Activated T-helper 1 cell treated with anti-CD3 and anti-CD28 coated beads, Interleukin-12 subunit alpha, Interleukin-12 subunit beta, Interleukin-2, Interleukin-4 antibody, amounts not matched to agents 30 ng/mL and 10 ng/mL and 1 ng/mL, durations not matched to agents 14 hours and 24 hours and 36 hours (primary cell): ENCODE measurements at regions of chr10 and their contacts with region 1.

Region 1: DNA sequence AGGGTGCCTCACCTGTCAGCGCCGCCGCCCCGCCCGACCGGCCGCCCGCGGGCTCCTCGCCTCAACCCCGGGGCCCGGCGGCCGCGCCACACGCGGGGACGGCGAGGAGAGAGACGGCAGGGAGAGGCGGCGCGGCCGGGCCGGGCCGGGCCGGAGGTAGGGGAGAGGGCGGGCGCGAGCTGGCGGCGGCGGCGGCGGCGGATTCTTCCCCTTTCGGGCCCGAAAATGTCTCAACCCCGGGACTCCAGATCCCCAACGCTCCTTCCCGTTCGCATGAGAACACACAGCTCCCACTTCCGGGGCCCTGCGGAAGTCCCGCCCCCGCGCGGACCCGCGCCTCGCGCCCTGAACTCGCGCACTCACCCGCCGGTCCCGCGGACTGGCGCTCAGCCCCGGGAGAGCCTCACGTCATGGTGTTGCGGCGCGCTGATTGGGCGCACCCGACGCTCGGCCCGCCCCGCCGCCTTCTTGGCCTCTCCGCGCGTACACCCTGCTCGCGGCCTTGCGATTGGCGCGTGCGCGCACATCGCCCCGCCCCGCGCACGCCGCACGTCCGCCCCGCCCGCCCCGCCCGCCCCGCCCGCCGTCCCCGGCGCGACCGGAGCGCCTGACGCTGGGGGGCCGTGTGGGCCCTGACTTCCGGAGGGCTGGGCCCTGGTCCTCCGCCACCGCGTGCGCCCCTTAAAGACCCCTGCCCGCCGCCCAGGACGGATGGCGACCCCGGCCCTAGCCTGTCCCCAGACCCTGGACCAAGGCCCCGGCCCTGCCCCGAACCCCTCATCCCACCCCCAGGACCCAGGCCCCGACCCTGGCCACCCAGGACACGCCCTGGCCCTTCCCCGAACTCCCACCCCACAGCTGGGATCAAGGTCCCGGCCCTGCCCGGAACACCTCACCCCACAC is at the start of gene LARP4B:
- DNase-seq: peak; percentile 98
- H3K4me3 Mint-ChIP-seq: peak within 1 kb of the TSS; percentile 99
- H3K27ac Mint-ChIP-seq: peak within 1 kb of the TSS; percentile 96
- H3K4me1 Mint-ChIP-seq: peaks cover 31% of the 10 kb centered on the region
- H3K27me3 Mint-ChIP-seq: no peaks in the 10 kb centered on the region
- total RNA-seq, gene LARP4B: 172 and 174 TPM in 2 replicates

Region 2: DNA sequence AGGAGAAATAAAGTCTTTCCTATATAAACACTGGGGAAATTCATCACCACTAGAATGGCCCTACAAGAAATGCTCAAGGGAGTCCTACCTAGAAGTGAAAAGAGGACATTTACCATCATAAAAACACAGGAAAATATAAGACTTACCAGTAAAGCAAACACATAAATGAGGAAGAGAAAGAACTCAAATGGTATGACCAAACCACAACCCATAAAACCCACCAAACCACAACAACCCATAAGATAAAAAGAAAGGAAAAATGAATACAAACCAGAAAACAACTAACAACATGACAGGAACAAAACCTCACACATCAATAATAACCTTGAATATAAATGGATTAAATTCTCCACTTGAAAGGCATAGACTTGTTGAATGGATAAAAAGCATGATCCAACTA is 170.3 kb before region 1 on chr10:
- intact Hi-C with region 1: no loop called
- DNase-seq: no peak
- H3K4me3 Mint-ChIP-seq: no peak overlapping the region
- H3K27ac Mint-ChIP-seq: no peak overlapping the region
- H3K4me1 Mint-ChIP-seq: peaks cover 11% of the 10 kb centered on the region
- H3K27me3 Mint-ChIP-seq: peaks cover 6% of the 10 kb centered on the region

Region 3: DNA sequence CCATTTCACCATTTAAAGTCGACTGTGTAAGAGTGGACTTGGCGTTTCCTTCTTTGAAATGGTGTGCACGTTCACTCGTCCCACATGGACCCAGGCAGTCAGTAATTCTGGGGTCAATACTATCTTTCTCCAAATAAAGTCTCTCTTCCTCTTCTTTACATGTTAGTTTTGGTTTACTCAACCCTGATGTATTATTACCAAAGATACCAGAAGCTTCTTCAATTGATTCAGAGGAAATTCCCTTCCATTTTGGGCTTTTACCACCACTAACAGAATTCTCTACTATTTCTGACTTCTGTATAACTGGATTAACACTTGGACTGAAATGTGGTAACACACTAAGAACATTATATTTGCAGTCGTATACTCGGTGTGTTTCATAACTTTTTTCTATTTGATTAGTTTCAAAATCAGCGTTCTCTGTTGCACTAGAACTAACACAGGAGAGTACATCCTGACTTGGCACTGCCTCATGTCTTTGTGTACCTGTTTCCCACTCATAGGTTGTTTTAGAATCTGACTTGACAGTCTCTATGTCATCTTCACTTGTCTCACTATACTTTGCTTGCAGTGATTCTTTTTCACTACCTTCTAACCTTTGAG is 61.0 kb before region 1 on chr10:
- intact Hi-C with region 1: loop called (anchors 2 kb)
- DNase-seq: no peak
- H3K4me3 Mint-ChIP-seq: no peak overlapping the region
- H3K27ac Mint-ChIP-seq: peak overlapping the region; percentile 30
- H3K4me1 Mint-ChIP-seq: peaks cover 42% of the 10 kb centered on the region
- H3K27me3 Mint-ChIP-seq: no peaks in the 10 kb centered on the region

Region 4: GRCh38 chr10:1048732-1049424 is 117.2 kb after region 1 on chr10 and contains the start of gene IDI1:
- intact Hi-C with region 1: loop called (anchors 1 kb)
- DNase-seq: peak; percentile 97
- H3K4me3 Mint-ChIP-seq: peak within 1 kb of the TSS; percentile 96
- H3K27ac Mint-ChIP-seq: peak within 1 kb of the TSS; percentile 99
- H3K4me1 Mint-ChIP-seq: peaks cover 68% of the 10 kb centered on the region
- H3K27me3 Mint-ChIP-seq: no peaks in the 10 kb centered on the region
- total RNA-seq, gene IDI1: 76.0 and 78.9 TPM in 2 replicates

Region 5: GRCh38 chr10:1056326-1057105 is 124.8 kb after region 1 on chr10 and contains the start of gene WDR37:
- intact Hi-C with region 1: loop called (anchors 1 kb)
- DNase-seq: peak; percentile 84
- H3K4me3 Mint-ChIP-seq: peak within 1 kb of the TSS; percentile 97
- H3K27ac Mint-ChIP-seq: peak within 1 kb of the TSS; percentile 91
- H3K4me1 Mint-ChIP-seq: peaks cover 78% of the 10 kb centered on the region
- H3K27me3 Mint-ChIP-seq: no peaks in the 10 kb centered on the region
- total RNA-seq, gene WDR37: 19.9 and 21.1 TPM in 2 replicates